Sciatic nerve (tissue), 2 donors: ENCODE measurements at regions of chr16 and their contacts with region 1.

Region 1: GRCh38 chr16:58960484-58960883 is 226.4 kb upstream of the GOT2 start:
- DNase-seq: no peak
- ATAC-seq: no peak

Region 2: DNA sequence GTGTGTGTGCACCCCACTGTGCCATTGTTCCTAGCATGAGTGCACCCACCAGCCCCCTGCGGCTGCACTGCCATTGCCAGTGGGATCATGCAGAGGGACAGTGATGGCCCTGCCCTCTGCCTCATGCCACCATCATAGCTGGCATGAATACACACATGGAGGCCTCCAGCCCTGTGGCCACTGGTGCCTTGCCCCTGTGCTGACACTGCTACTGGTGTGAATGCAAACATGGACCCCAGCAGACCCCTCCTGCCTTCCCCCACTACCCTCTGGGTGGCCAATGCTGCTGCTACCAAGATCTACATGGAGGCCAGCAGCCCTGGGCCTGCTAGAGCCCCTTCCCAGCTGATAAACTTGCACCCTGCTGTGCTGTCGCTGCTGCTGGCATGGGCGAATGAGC is 769.1 kb after region 1 on chr16:
- intact Hi-C with region 1: loop called (anchors 5 kb)
- DNase-seq: no peak
- ATAC-seq: no peak

Region 3: DNA sequence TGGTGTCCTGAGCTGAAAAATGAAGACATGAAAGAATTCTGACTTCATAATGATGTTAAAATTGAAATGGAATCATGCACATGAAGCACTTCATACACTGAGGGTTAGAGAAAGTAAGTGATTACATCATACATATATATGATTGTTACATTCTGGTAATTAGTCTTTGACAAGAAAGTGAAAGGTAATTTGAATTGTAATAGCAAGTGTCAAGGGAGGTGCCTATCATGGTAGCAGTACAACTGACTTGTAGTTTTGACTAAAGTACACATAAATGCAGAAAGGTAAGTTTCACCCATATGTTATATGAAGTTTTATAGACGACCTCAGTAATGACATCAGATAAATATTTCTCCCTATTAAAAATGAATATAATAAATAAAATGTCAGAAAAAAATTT is 1098.7 kb after region 1 on chr16:
- intact Hi-C with region 1: loop called (anchors 5 kb)
- DNase-seq: no peak
- ATAC-seq: no peak